ENCODE measurements at regions of chr17 and their contacts with region 1.

Region 1: DNA sequence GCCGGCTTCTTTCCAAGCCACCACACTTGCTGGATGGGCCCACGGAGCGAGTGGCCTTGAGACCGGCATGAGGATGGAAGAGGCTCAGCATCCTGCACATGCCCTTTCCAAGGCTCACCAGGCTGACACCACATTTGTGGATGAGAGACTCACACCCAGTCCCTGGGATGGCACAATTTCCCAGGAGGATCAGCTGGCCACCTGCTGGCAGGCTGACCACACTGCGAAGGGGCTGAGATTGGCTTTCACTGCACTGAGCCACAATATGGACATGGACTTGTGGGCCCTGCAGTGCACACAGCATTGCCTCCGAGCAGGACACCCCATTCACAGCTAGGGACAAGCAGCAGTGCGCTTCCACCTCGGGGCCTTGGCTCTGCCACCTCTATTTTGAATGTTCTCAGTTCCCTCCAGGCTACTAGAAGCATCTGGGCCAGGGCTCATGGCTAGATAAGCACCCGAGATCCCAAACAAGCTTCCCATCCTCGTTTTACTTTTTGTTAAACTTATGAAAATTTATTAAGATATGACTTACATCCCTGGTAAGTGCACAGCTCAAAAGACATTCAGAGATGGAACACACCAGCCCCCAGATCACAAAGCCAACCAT is 25.3 kb upstream of the KSR1 start:
- DNase-seq: peak; percentile 74
- H3K4me3 ChIP-seq: no peak overlapping the region
- H3K27ac ChIP-seq: no peak overlapping the region
- H3K4me1 ChIP-seq: no peaks in the 10 kb centered on the region
- H3K27me3 ChIP-seq: no peaks in the 10 kb centered on the region
- CTCF ChIP-seq: peak; percentile 82 to 93
- POLR2A ChIP-seq: no peak

Region 2: GRCh38 chr17:27362939-27363725 is 67.9 kb before region 1 on chr17:
- CTCF ChIA-PET with region 1: no interaction called
- POLR2A ChIA-PET with region 1: no interaction called
- dilution Hi-C with region 1: no loop called
- intact Hi-C with region 1: no loop called
- DNase-seq: no peak
- H3K4me3 ChIP-seq: no peak overlapping the region
- H3K27ac ChIP-seq: no peak overlapping the region
- H3K4me1 ChIP-seq: no peaks in the 10 kb centered on the region
- H3K27me3 ChIP-seq: no peaks in the 10 kb centered on the region
- CTCF ChIP-seq: no peak
- POLR2A ChIP-seq: no peak

Region 3: GRCh38 chr17:27381007-27381501 is 49.9 kb before region 1 on chr17:
- CTCF ChIA-PET with region 1: interaction called, 9 read pairs
- POLR2A ChIA-PET with region 1: no interaction called
- dilution Hi-C with region 1: no loop called
- intact Hi-C with region 1: loop called (anchors 1 kb)
- DNase-seq: peak; percentile 51
- H3K4me3 ChIP-seq: no peak overlapping the region
- H3K27ac ChIP-seq: peak overlapping the region; percentile 77
- H3K4me1 ChIP-seq: peaks cover 45% of the 10 kb centered on the region
- H3K27me3 ChIP-seq: no peaks in the 10 kb centered on the region
- CTCF ChIP-seq: peak; percentile 94 to 95
- POLR2A ChIP-seq: no peak

Region 4: DNA sequence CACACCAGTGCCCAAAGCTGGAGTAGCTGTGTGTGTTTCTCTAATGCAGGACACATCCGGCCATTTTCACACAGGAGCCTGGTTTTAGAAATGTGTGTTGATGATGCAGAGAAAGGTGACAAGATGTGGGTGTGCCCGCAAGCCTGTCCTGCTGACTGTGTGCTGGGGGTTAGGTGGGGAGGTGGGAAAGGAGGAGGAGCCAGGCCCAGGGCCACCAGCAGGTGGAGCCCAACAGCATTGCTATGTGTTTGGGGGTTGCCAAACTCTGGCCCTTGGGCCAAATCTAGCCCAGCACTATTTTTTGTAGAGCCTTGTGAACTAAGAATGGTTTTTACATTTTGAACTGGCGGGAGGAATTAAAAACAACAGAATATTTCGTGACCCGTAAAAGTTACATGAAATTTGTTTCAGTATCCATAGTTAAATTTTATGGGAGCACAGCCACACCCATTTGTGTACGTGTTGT is 138.3 kb after region 1 on chr17:
- CTCF ChIA-PET with region 1: no interaction called
- POLR2A ChIA-PET with region 1: no interaction called
- dilution Hi-C with region 1: loop called (anchors 25 kb)
- intact Hi-C with region 1: no loop called
- DNase-seq: peak; percentile 33
- H3K4me3 ChIP-seq: no peak overlapping the region
- H3K27ac ChIP-seq: no peak overlapping the region
- H3K4me1 ChIP-seq: peaks cover 27% of the 10 kb centered on the region
- H3K27me3 ChIP-seq: no peaks in the 10 kb centered on the region
- CTCF ChIP-seq: peak; percentile 52 to 76
- POLR2A ChIP-seq: no peak